ENCODE measurements at regions of chr22 and their contacts with region 1.

Region 1: GRCh38 chr22:35582861-35583670 is 34.1 kb downstream of the MB start:
- DNase-seq: peak; percentile 68
- ATAC-seq: peak; percentile 51

Region 2: DNA sequence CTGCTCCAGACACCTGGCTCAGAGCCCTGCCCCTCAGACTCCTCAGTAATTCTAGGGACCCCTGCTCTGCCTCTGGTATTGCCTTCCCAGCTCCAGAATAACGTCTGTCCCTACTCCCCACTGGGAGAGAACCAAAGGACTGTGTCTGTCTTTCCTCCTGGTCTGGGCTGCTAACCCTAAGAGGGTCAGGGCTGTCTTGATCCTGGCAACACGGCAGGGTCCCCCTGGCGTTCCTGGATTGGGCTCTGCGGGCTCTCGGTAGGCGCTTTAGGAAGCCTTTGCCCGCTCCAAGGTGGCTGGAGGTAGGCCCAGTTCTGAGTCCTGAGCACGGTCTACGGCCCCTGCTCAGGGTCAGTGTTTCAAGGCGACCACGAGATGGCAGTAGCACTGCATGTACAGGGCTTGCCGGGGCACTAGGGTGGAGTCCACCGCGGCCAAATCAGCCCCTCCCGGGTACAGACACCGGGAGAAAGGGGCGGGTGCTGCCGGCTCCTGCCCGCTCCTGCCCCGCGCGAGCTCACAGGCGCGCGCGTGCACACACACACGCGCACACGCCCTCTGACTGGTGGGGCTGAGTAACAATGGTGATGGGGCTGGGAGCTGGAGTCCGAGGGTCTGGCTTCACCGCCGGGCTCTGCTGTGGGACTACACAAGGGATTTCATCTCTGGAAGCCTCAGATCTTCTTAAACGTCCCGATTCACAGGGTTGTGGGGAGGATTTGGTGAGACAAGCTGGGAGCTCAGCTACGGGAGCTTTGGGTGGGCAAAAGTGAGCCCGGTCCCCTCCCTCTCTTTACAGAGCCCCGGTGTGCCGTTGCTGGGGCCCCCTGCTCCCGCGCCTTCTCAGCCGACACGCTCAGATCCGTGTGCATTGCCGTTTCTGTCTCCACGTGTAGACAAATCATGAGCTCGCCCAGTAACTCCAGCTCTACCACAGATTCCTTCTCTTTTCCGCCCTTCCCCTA is 232.2 kb before region 1 on chr22:
- intact Hi-C with region 1: loop called (anchors 5 kb)
- DNase-seq: peak; percentile 93
- ATAC-seq: peak; percentile 92

Region 3: DNA sequence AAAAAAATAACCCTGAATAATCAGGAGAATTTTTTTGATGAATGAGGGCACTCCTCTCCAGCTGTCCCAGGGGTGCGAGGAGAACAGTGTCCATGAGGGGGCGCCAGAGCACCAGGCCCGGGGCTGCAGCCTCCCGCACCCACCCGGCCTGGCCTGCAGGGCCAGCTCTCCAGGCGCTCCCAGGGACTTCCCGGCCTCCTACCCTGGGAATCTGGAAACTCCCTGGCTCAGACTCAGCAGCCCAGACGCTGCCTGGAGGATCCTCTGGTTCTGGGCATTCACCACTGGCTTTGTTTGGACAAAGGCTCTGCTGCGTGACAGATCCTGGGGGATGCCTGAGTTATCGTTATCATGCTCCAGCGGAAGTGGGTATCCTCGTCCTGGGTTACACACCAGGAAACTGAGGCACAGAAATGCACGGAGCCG is 152.2 kb before region 1 on chr22:
- intact Hi-C with region 1: loop called (anchors 2 kb)
- DNase-seq: peak; percentile 91
- ATAC-seq: peak; percentile 98

Region 4: GRCh38 chr22:35622191-35622913 is 39.3 kb after region 1 on chr22:
- intact Hi-C with region 1: loop called (anchors 2 kb)
- DNase-seq: peak; percentile 79
- ATAC-seq: peak; percentile 64

Region 5: GRCh38 chr22:36123673-36124630 is 540.9 kb after region 1 on chr22:
- intact Hi-C with region 1: loop called (anchors 5 kb)
- DNase-seq: peak; percentile 97
- ATAC-seq: peak; percentile 99